ENCODE measurements at regions of chr4 and their contacts with region 1.

Region 1: GRCh38 chr4:55948726-55949474 is at the start of gene CEP135:
- DNase-seq: peak; percentile 88 to 95 (median 91)
- ATAC-seq: peak; percentile 94
- H3K4me3 ChIP-seq: peak within 1 kb of the TSS; percentile 78
- H3K27ac ChIP-seq: peak within 1 kb of the TSS; percentile 96
- H3K4me1 ChIP-seq: peaks cover 6 to 21% of the 10 kb centered on the region in 2 experiments
- H3K27me3 ChIP-seq: no peaks in the 10 kb centered on the region
- CTCF ChIP-seq: peak; percentile 88 to 93 (median 92)
- EP300 ChIP-seq: 0 out of 2 replicates have a peak, but pooled peaks have one; percentile 18
- POLR2A ChIP-seq: peak; percentile 95
- RAD21 ChIP-seq: peak; percentile 65 to 68
- polyA plus RNA-seq, gene CEP135: 3.1 to 3.3 TPM

Region 2: DNA sequence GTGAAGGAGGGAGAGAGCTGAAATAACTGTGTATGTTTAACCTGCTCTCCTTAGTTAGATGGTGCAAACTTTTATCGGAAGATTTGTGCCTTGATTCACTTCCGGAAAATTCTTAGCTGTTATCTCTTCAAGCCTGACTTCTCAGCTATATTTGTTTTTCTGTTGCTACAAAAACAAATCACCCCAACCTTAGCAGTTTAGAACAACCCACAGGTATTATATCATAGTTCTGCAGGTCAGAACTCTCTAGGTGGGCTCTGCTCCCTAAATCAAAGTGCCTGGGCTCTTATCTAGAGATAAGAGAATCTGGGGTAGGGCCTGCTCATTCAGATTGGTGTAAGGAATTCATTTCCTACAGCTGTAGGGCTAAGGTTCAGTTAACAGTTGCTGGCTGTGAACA is 15.3 kb before region 1 on chr4:
- CTCF ChIA-PET with region 1: no interaction called
- POLR2A ChIA-PET with region 1: interaction called, 12 read pairs
- in situ Hi-C with region 1: no loop called
- intact Hi-C with region 1: no loop called
- DNase-seq: no peak
- ATAC-seq: no peak
- H3K4me3 ChIP-seq: no peak overlapping the region
- H3K27ac ChIP-seq: no peak overlapping the region
- H3K4me1 ChIP-seq: no peaks in the 10 kb centered on the region
- H3K27me3 ChIP-seq: peaks cover 0 to 7% of the 10 kb centered on the region in 2 experiments; a peak in 2 of 5 replicates
- CTCF ChIP-seq: no peak
- EP300 ChIP-seq: no peak
- POLR2A ChIP-seq: no peak
- RAD21 ChIP-seq: no peak

Region 3: DNA sequence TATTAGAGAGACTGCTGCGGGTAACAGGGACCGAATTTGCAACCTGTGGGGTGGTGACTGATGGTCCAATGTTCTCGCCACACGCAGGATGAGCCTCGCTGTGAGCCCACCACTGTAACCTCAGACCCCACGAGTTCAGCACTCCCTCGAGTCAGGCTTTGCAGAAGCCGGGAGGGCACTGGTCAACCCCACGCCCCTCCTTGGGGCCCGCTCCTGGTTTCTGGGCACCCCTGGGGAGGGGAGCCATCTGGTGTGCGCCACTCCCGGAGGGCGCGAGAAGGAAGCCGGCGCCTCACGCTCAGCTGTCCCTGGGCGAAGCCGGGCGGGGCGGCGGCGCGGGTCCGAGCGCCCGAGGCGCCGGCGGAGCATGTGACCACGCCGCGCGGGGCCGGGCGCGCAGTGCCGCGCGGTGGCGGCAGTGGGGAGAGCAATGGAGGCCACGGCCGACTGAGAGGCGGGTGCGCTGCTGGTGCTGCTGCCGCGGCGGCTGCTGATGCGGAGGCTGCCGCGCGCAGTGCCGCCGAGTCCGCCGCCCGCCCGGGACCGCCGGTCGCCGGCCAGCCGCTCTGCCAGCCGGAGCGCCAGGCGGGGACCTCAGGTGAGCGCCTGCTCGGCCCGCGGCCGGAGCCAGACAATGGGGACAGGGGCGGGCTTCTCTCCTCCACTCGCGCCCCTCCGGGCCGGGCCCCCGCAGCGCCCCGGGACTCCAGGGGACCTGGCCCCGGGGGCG is 100.0 kb after region 1 on chr4:
- CTCF ChIA-PET with region 1: interaction called, 4 read pairs
- POLR2A ChIA-PET with region 1: no interaction called
- in situ Hi-C with region 1: no loop called
- intact Hi-C with region 1: loop called (anchors 2 kb)
- DNase-seq: peak; percentile 60 to 75 (median 68)
- ATAC-seq: peak; percentile 98
- H3K4me3 ChIP-seq: peak overlapping the region; percentile 47
- H3K27ac ChIP-seq: no peak overlapping the region
- H3K4me1 ChIP-seq: peaks cover 0 to 16% of the 10 kb centered on the region in 2 experiments; a peak in 3 of 5 replicates
- H3K27me3 ChIP-seq: peaks cover 15 to 17% of the 10 kb centered on the region in 2 experiments
- CTCF ChIP-seq: peak in 2 of 3 experiments; percentile 62 to 76; a peak in 5 of 6 replicates
- EP300 ChIP-seq: no peak
- POLR2A ChIP-seq: no peak
- RAD21 ChIP-seq: peak in 1 of 2 experiments; percentile 71; a peak in 3 of 4 replicates

Region 4: DNA sequence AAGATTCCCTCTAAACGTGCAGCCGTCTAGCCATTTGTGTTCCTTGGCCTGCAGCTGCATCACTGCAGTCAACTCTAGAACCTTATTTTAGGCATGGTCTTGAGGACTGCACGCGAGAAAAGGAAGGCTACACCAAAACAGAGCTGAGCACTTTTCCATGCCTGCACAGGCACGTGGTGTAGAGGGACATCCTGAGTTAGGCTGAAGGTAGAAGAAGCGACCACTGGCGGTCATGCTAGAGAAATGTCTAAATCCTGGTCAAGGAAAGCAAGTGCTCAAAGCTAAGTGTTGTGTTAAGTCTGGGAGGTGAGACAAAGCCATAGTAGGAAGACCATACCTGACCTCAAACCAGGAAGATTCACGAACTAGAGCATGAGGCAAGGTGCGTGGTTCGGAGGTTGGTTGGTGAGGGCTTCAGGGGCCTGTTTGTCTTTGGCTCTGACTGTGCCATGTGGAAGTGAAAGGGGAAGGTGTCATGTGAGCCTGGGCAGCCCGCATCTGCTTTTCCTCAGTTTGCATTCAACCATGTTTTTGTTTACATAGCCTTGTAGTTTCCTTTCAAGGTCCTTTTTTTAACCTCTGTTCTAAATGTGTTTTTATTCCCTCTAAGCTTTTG is 234.6 kb after region 1 on chr4:
- CTCF ChIA-PET with region 1: no interaction called
- POLR2A ChIA-PET with region 1: no interaction called
- in situ Hi-C with region 1: no loop called
- intact Hi-C with region 1: loop called (anchors 2 kb)
- DNase-seq: peak in 3 of 4 experiments; percentile 12 to 55 (median 22)
- ATAC-seq: peak; percentile 87
- H3K4me3 ChIP-seq: no peak overlapping the region
- H3K27ac ChIP-seq: no peak overlapping the region
- H3K4me1 ChIP-seq: peaks cover 0 to 10% of the 10 kb centered on the region in 2 experiments; a peak in 3 of 5 replicates
- H3K27me3 ChIP-seq: peaks cover 4 to 8% of the 10 kb centered on the region in 2 experiments; a peak in 4 of 5 replicates
- CTCF ChIP-seq: peak; percentile 48 to 55 (median 54)
- EP300 ChIP-seq: no peak
- POLR2A ChIP-seq: no peak
- RAD21 ChIP-seq: peak; percentile 9 to 43; a peak in 2 of 4 replicates

Region 5: DNA sequence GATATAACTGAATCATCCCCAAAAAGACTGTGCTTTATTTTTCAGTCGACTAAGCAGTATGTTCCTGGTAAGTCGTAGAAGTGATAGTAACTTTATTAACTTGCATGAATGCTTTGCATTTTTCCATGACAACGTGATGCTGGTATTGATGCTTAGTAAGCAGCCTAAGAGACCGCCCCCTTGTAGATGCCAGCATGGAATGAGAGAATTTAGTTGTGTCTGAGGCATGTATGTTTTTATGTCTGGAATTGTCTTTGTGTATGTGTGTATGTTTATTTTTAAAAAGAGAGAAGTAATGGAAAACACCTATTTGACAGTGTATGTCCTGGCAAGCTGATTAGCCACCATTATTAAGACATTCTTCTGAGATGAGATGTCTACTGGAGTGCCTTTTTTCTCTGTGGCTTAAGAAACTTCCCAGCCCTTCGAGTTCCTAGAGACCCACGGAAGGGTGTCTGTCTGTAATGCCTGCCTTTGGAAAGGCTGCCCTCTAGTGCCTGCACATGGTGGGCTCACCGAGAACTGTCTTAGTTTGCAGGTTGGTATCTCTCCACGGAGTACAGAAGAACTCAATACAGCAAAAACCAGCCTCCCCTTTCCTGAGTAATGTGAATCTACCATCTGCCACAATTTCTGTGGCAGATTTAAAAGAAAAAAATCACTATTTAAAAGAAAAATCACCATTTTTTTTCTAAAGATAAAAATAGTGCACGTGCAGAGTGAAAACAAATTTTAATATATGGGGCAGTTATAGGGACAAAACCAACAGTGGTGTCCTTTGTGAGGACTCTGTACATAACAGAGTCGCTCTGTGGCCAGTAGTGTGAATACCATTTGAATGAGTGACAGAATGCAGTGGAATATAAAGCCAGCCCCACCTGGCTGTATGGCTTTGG is 352.5 kb after region 1 on chr4:
- CTCF ChIA-PET with region 1: interaction called, 4 read pairs
- POLR2A ChIA-PET with region 1: no interaction called
- in situ Hi-C with region 1: no loop called
- intact Hi-C with region 1: loop called (anchors 1 kb)
- DNase-seq: peak; percentile 64 to 81 (median 66)
- ATAC-seq: peak; percentile 99
- H3K4me3 ChIP-seq: no peak overlapping the region
- H3K27ac ChIP-seq: no peak overlapping the region
- H3K4me1 ChIP-seq: no peaks in the 10 kb centered on the region; a peak in 1 of 5 replicates
- H3K27me3 ChIP-seq: peaks cover 20 to 43% of the 10 kb centered on the region in 2 experiments; a peak in 4 of 5 replicates
- CTCF ChIP-seq: peak; percentile 85 to 90 (median 89)
- EP300 ChIP-seq: no peak
- POLR2A ChIP-seq: no peak
- RAD21 ChIP-seq: peak; percentile 88 to 91

Region 6: DNA sequence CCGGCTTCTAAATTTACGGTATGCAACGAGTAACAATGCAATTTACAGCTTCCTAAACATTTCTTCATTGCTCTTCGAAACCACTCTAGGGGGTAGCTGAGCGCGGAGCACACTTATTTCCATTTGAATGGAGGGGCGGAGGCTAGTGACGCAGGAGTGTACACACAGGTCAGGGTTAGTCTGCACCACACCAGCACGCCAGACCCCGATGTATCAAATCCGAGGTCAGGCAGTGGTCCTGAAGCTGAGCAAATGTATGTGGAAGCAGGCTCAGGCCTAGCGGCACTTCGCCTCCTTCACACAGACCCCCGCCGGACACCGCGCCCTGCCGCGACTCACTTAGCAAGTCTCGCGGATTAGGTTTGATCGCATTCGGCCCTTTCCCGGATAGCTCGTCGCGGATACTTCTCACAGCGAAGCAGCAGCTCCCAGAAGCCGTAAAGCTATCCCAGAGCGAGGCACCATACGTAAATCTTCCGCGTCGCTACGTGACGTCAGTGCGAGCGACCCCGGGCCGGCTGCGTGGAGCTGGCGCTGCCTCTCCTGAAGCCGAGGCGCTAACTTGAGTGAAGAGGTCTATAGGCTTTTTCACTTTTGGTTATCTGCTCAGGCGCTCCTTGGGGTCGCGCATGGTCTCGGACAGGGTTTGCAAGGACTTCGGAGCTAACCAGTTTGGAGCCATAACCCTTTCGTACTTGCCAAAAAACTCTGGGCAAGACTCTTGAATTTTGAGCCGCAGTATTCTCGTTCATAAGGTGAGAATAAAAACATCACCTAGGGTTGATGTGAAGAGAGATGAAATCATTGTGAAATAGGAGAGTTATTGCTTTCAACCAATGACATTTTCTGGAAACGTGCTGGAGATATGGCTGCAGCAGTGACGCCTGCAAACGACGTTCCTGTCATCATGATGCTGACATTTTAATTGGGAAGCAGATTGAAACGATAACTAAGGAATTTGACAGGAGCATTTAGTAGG is 438.4 kb after region 1 on chr4 and contains the start of gene AASDH:
- CTCF ChIA-PET with region 1: no interaction called
- POLR2A ChIA-PET with region 1: no interaction called
- in situ Hi-C with region 1: no loop called
- intact Hi-C with region 1: loop called (anchors 10 kb)
- DNase-seq: peak; percentile 86 to 96 (median 89)
- ATAC-seq: peak; percentile 88
- H3K4me3 ChIP-seq: peak within 1 kb of the TSS; percentile 61
- H3K27ac ChIP-seq: peak within 1 kb of the TSS; percentile 89
- H3K4me1 ChIP-seq: peaks cover 3 to 17% of the 10 kb centered on the region in 2 experiments; a peak in 2 of 5 replicates
- H3K27me3 ChIP-seq: no peaks in the 10 kb centered on the region
- CTCF ChIP-seq: peak in 2 of 3 experiments; percentile 4 to 10; a peak in 1 of 6 replicates
- EP300 ChIP-seq: peak; percentile 51
- POLR2A ChIP-seq: peak; percentile 98
- RAD21 ChIP-seq: no peak
- polyA plus RNA-seq, gene AASDH: 16.8 to 29.7 TPM

Measured in K562 (cell line).